Gastrocnemius medialis (tissue), 4 donors: ENCODE measurements at regions of chr3 and their contacts with region 1.

Region 1: DNA sequence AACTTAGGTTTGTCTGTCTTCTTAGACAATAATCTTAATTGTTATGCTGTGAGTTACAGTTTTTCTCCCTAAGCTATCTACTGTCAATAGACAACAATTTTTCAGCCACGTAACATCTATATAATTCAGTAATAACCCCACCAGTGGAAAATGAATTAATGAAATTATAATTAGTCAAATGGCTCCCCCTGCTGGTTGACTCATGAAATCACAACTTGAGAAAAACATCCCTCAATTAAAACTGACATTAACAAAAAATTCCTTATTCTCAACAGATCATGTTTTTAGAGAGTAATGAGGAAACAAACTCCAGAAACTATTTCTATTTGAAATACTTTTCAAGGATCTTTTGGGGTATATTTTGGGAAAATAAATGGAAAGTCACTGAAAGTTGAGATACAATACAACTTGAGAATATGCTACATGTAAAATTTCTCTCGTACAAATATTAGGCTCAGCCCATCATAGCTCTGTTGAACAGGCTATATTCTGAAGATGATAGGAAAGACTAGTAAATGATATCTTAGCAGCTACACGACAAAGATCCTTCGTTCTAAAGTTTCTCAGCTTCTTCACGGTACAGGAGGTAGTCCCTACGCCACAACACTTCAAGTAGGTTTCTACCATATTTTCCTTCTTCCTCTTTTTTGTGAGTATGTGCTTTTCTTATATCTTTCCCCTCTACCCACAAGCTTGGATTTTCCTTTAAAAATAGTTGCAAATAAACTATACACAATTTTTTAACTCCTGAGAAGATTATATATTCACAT is 20.7 kb downstream of the PPP1R2 start:
- DNase-seq: no peak
- ATAC-seq: no peak
- H3K4me3 ChIP-seq: no peak overlapping the region
- H3K27ac ChIP-seq: no peak overlapping the region
- H3K4me1 ChIP-seq: peaks cover 0 to 3% of the 10 kb centered on the region in 2 donors
- H3K27me3 ChIP-seq: no peaks in the 10 kb centered on the region
- CTCF ChIP-seq: peak; percentile 65 to 76 (median 74)
- POLR2A ChIP-seq: no peak

Region 2: GRCh38 chr3:194671900-194672808 is 850.3 kb before region 1 on chr3 and contains the start of gene LSG1:
- in situ Hi-C with region 1: loop called (anchors 10 to 25 kb)
- intact Hi-C with region 1: loop called (anchors 5 kb)
- DNase-seq: peak; percentile 84 to 88
- ATAC-seq: peak; percentile 98
- H3K4me3 ChIP-seq: peak within 1 kb of the TSS; percentile 66 to 95 (median 87)
- H3K27ac ChIP-seq: peak within 1 kb of the TSS; percentile 83 to 91 (median 88)
- H3K4me1 ChIP-seq: peaks cover 32 to 33% of the 10 kb centered on the region in 2 donors
- H3K27me3 ChIP-seq: no peaks in the 10 kb centered on the region
- CTCF ChIP-seq: no peak
- POLR2A ChIP-seq: peak; percentile 49 to 64
- total RNA-seq, gene LSG1: 23.2 to 38.4 (median 28.0) TPM

Region 3: GRCh38 chr3:195147649-195148095 is 374.8 kb before region 1 on chr3:
- in situ Hi-C with region 1: loop called in 1 of 4 experiments (anchors 25 kb)
- intact Hi-C with region 1: no loop called
- DNase-seq: peak in 1 of 2 donors; percentile 37
- ATAC-seq: peak in 1 of 2 donors; percentile 34
- H3K4me3 ChIP-seq: peak overlapping the region in 3 of 4 donors; percentile 5 to 35 (median 26)
- H3K27ac ChIP-seq: peak overlapping the region in 3 of 4 donors; percentile 77 to 78 (median 78)
- H3K4me1 ChIP-seq: peaks cover 5 to 26% of the 10 kb centered on the region in 2 donors
- H3K27me3 ChIP-seq: no peaks in the 10 kb centered on the region
- CTCF ChIP-seq: no peak
- POLR2A ChIP-seq: no peak

Region 4: GRCh38 chr3:195271116-195271858 is 251.2 kb before region 1 on chr3 and contains the start of gene XXYLT1:
- in situ Hi-C with region 1: loop called (anchors 5 to 25 kb)
- intact Hi-C with region 1: loop called (anchors 1 kb)
- DNase-seq: peak; percentile 70 to 81
- ATAC-seq: peak; percentile 93 to 96
- H3K4me3 ChIP-seq: peak within 1 kb of the TSS; percentile 73 to 96 (median 85)
- H3K27ac ChIP-seq: peak within 1 kb of the TSS; percentile 78 to 95 (median 87)
- H3K4me1 ChIP-seq: peaks cover 15 to 19% of the 10 kb centered on the region in 2 donors
- H3K27me3 ChIP-seq: no peaks in the 10 kb centered on the region
- CTCF ChIP-seq: peak; percentile 84 to 94 (median 90)
- POLR2A ChIP-seq: no peak
- total RNA-seq, gene XXYLT1: 0.87 to 3.1 (median 1.3) TPM

Region 5: DNA sequence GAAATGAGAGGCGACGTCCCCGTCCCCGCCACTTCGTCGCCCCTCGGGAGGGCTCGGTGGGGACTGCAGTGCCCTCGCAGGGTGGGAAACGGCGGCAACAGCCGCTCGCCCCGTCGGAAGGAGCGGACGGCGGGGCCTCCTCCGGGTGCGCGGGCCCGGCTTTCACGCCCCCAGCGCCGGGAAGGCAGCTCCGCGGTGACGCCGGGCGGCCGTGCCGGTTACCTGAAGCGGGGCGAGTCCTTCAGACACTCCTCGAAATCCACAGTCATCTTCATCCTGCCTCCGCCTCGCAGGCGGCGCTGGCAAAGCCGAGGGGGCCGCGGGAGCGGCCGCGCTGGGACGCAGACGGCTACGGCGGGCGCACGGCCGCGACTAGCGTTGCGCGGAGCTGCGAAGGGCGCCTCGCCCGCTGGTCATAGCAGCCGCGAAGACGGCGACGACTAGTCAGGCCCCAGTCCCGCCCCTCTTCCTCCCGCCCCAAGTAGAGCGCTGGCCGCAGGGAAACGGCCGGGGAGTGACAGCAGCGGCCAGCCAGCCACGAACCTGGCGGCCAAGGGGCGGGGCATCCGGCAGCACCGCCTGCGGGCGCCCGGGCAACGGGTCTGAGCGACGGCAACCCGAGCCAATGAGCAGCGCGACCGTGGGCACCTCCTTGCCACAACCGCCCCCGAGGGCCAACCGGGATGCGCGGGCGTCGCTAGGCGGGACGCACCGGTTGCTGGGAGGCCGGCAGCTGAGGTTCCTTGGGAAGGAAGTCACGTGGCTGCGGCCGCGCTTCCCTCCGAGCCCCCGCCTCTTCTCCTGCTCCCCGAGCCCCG is 79.7 kb before region 1 on chr3 and contains the start of gene ACAP2:
- in situ Hi-C with region 1: no loop called
- intact Hi-C with region 1: loop called (anchors 5 kb)
- DNase-seq: peak; percentile 100
- ATAC-seq: peak; percentile 91 to 93
- H3K4me3 ChIP-seq: peak within 1 kb of the TSS; percentile 71 to 95 (median 91)
- H3K27ac ChIP-seq: peak within 1 kb of the TSS; percentile 93 to 98 (median 94)
- H3K4me1 ChIP-seq: peaks cover 16 to 25% of the 10 kb centered on the region in 2 donors
- H3K27me3 ChIP-seq: no peaks in the 10 kb centered on the region
- CTCF ChIP-seq: no peak
- POLR2A ChIP-seq: peak; percentile 96 to 97
- total RNA-seq, gene ACAP2: 13.2 to 27.6 (median 15.5) TPM

Region 6: DNA sequence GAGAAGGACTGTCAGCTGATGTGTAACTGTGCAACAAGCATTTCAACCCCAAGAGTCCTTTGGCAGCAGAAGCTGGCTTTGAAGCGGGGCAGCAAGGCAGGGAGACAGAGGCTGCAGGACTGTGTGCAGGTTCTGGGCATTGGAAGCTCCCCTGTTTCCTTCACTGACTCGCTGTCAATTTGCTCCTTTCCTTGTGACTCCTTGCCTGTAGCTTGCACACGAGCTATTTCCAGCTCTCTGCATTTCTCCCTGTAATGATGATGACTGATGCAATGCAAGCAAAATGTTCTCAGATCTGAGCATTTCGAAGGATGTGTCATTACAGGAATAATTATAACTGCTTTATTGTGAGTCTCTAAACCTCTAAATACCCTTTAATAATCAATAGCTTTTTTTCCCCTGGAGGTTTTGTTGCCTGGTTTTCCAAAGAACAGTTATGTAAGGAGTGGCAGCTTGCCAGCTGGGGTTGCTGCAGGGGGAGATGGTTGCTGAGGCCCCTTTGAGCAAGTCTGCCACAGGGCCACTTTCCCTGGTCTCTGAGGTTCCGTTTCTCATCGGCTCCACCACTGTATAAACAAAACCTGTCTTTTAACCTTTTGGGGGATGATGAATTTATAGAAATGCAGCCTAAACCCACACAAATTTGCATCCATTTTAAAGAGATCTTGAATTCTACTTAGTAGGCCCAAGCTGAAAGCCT is 58.5 kb after region 1 on chr3:
- in situ Hi-C with region 1: no loop called
- intact Hi-C with region 1: no loop called
- DNase-seq: no peak
- ATAC-seq: peak; percentile 35 to 72
- H3K4me3 ChIP-seq: peak overlapping the region; percentile 33 to 47 (median 38)
- H3K27ac ChIP-seq: peak overlapping the region in 2 of 4 donors; percentile 44 to 68
- H3K4me1 ChIP-seq: peaks cover 26 to 27% of the 10 kb centered on the region in 2 donors
- H3K27me3 ChIP-seq: no peaks in the 10 kb centered on the region
- CTCF ChIP-seq: no peak
- POLR2A ChIP-seq: no peak